ENCODE measurements at regions of chr12 and their contacts with region 1.

Region 1: DNA sequence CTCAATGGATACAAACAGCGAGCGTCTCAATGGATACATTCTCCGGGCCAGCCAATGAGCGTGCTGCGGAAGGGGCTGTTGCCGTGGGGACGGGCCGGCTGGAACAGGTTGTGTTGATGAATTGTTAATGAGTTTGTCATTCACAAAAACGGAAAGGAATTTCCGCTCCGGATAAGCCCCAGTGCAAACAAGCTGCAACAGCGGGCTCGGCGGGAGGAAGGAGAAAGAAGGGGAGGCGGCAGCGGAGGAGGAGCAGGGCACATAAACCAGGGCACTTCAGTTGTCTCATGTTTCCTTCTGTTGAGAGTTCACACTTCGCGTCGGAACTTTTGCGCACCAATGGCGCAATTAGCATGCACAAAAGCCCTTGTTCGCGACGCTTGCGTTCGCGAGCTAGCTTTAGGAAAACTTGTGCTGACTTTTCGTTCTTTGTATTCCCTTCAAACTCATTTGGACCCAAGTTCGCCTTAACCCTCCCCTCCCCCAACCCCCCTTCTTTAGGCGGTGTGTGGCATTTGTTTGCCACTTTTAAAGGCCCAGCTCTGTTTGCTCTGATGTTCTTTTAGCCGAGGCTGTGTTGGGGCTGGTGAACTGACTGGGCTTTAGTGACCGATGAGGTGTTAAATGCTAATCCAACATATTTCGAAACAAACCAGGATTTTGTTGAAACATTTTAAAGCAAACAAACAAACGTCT is at the start of gene DUSP6:
- DNase-seq: peak; percentile 98
- total RNA-seq, gene DUSP6: 28.9 TPM

Region 2: DNA sequence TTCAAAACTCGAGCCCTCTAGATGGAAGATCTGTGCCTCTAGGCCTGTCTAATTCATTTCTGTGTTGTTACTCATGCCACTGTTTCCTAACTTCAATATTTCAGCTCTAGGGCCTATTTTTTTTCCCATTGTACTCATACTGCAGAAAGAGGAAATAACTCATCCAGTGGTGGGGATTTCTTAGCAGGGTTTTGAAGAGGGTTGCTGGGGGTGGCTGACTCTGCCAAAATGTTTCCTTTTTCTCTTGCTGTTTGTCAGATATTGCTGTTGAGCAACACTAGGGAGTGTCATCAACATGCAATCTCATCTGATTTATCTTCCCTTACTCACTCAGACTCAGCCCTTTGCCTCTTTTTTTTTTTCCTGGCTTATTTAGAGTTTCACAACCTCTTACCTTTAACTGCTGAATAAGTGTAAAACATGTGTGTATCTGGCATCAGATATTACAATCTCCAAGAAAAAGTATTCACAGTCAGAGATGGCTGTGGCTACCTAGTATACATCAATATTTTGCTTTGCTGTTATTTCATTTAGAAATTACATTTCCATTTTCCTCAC is 189.9 kb before region 1 on chr12:
- intact Hi-C with region 1: loop called (anchors 1 kb)
- DNase-seq: peak; percentile 77

Region 3: GRCh38 chr12:89236748-89237388 is 115.8 kb before region 1 on chr12:
- intact Hi-C with region 1: loop called (anchors 5 kb)
- DNase-seq: no peak

Region 4: DNA sequence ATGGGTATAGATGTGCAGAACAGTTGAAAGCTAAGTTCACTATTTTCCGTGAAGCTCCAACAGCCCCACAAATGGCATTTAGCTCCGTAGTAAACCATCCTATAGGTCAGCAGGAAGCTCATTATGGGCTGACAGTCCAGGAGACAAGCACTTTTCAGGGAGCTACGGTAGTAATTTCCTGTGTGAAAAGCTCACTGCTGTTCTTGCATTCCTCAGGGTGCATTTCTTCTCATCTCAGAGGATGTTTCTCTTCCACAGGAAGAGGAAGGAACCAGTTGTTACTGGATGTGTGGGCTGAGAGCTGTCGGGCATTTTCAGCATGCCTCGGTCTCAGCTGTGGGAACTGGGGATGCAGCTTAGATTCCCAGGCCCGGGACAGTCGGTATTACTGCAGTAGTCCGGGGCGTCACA is 99.2 kb after region 1 on chr12:
- intact Hi-C with region 1: loop called (anchors 5 kb)
- DNase-seq: no peak

Region 5: GRCh38 chr12:89524541-89525285 is 172.1 kb after region 1 on chr12 and contains the start of gene GALNT4:
- intact Hi-C with region 1: loop called (anchors 10 kb)
- DNase-seq: peak; percentile 95
- total RNA-seq, gene GALNT4: 2.0 TPM

Measured in cardiac septum (tissue), 1 donor.